A549 (cell line): ENCODE measurements at regions of chr20 and their contacts with region 1.

Region 1: DNA sequence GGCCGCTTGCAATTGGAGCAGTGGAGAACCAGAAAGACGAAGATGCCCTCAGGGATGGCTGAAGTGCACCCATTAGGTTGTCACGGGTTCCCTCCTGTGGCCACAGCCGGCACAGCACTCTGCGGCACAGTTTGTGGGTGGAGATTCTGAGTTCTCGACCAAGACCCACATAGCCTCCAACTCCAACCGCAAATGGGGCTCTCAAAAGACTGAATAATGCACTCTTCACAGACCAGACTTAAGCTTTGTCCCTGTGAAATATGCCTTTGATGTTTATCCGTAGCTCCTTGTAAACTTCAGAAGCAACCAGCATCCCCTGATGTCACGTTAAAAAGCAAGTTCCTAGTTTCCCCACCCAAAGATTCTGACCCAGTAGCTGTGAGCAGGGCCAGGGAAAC is 934 bp upstream of the CST9 start:
- DNase-seq: peak; percentile 74 to 91
- ATAC-seq: peak; percentile 86 to 97
- H3K4me3 ChIP-seq: no peak overlapping the region
- H3K27ac ChIP-seq: no peak overlapping the region
- H3K4me1 ChIP-seq: no peaks in the 10 kb centered on the region; the same call in 2 of the 3 replicates
- CTCF ChIP-seq: peak; percentile 84
- EP300 ChIP-seq: no peak
- POLR2A ChIP-seq: no peak
- RAD21 ChIP-seq: peak; percentile 87 to 92

Region 2: GRCh38 chr20:23435626-23436539 is 170.8 kb before region 1 on chr20:
- CTCF ChIA-PET with region 1: interaction called, 176 read pairs
- POLR2A ChIA-PET with region 1: no interaction called
- DNase-seq: no peak
- ATAC-seq: no peak
- H3K4me3 ChIP-seq: no peak overlapping the region
- H3K27ac ChIP-seq: no peak overlapping the region
- H3K4me1 ChIP-seq: no peaks in the 10 kb centered on the region
- CTCF ChIP-seq: no peak
- EP300 ChIP-seq: no peak
- POLR2A ChIP-seq: no peak
- RAD21 ChIP-seq: no peak